ENCODE measurements at regions of chr18 and their contacts with region 1.

Region 1: DNA sequence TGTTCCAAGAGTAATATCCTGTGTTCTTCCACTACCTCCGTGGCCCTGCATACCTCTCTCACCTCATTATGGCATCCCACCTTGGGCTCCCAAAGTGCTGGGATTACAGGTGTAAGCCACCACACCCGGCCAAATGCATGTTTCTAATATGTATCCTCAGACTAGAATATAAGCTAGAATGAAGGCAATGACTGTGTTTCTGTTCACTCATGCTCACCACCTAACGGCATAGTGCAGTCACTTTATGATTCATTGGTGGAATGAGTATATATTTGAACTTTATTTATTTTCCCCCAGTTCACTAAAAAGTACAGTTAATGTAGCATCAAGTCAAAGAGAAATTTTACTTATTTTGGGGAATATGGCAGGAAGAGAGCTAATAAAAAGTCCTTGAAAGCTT is 11.3 kb downstream of the PIGN start:
- DNase-seq: no peak
- H3K4me3 ChIP-seq: no peak overlapping the region
- CTCF ChIP-seq: no peak

Region 2: DNA sequence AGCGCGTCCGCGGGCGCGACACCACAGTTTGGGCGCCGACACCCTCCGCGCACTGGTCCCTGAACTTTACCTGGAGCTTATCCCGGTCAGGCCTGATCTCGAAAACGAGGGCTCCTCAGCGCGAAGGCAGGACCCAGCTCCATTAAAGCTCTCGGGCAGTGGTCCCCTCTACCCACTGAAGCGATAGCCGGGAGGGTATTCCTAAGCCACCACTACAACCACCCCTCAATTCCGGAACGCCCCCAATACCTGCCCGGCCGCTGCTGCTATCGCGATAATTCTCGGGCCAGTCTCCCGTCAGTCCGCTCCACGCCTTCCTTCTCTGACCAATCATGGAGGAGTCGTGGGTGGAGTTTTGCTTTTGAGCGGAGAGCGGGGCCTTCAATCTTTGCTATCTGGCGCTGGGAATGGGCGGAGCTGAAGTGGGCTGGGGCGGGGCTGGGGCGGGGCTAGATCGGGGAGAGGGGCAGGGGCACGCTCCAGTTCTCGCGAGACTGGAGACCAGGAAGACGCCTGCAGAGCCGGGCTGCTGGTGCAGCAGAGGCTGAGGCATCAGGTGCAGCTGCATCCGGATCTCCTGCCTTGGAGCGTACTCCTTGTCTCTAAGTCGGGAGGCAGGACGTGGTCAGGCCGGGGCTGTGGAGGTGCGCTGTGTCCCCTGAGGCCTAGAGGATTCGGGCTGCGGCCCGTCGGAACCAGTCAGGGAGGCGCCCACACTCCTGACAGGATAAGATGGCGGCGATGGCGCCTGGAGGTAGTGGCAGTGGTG is 11.4 kb after region 1 on chr18 and contains the starts of genes PIGN and RELCH:
- CTCF ChIA-PET with region 1: interaction called, 18 read pairs
- POLR2A ChIA-PET with region 1: interaction called, 3 read pairs
- DNase-seq: peak; percentile 85
- H3K4me3 ChIP-seq: peak within 1 kb of the TSS; percentile 98
- CTCF ChIP-seq: no peak